Endothelial cell of umbilical vein (primary cell): ENCODE measurements at regions of chr12 and their contacts with region 1.

Region 1: GRCh38 chr12:119544765-119545625 is 48.6 kb upstream of the TMEM233 start:
- DNase-seq: peak; percentile 76
- H3K4me3 ChIP-seq: no peak overlapping the region
- H3K27ac ChIP-seq: no peak overlapping the region
- H3K4me1 ChIP-seq: no peaks in the 10 kb centered on the region
- H3K27me3 ChIP-seq: no peaks in the 10 kb centered on the region
- CTCF ChIP-seq: peak; percentile 63 to 76
- POLR2A ChIP-seq: no peak

Region 2: GRCh38 chr12:118377884-118378470 is 1167.0 kb before region 1 on chr12:
- CTCF ChIA-PET with region 1: interaction called, 13 read pairs
- POLR2A ChIA-PET with region 1: no interaction called
- dilution Hi-C with region 1: no loop called
- intact Hi-C with region 1: no loop called
- DNase-seq: peak; percentile 69
- H3K4me3 ChIP-seq: peak overlapping the region; percentile 80 to 94 (median 92)
- H3K27ac ChIP-seq: no peak overlapping the region
- H3K4me1 ChIP-seq: peaks cover 16% of the 10 kb centered on the region
- H3K27me3 ChIP-seq: no peaks in the 10 kb centered on the region
- CTCF ChIP-seq: peak; percentile 82 to 88
- POLR2A ChIP-seq: no peak

Region 3: DNA sequence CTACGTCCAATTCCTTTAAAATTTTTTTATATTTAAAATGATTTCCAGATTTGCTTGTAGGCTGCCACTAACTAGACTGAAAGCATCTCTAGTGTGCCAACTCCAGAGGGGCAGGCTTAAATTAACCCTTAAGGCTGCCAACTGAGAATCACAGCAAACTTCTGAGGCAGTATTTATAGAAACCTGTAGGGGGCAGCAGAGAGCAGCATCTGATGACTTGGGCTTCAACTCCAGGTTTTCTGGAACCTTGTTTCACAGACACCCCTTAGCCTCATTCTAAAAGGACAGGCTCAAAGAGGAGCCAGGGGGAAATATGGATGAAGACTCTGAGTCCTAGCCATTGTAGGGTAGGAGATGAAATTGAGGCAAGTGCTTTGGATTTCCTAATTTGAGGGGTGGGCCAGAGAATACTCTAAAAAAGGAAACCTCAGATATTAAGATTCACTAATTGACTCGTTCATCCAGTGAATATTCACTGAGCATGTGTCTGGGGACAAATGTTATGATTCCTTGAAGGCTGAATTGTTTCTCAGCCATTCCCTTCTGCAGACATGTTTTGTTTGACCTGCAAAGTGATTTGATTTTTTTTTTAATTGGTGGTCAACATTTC is 429.6 kb before region 1 on chr12:
- CTCF ChIA-PET with region 1: interaction called, 5 read pairs
- POLR2A ChIA-PET with region 1: no interaction called
- dilution Hi-C with region 1: no loop called
- intact Hi-C with region 1: loop called (anchors 1 kb)
- DNase-seq: peak; percentile 43
- H3K4me3 ChIP-seq: no peak overlapping the region
- H3K27ac ChIP-seq: no peak overlapping the region
- H3K4me1 ChIP-seq: no peaks in the 10 kb centered on the region
- H3K27me3 ChIP-seq: no peaks in the 10 kb centered on the region
- CTCF ChIP-seq: peak; percentile 68 to 75
- POLR2A ChIP-seq: no peak

Region 4: DNA sequence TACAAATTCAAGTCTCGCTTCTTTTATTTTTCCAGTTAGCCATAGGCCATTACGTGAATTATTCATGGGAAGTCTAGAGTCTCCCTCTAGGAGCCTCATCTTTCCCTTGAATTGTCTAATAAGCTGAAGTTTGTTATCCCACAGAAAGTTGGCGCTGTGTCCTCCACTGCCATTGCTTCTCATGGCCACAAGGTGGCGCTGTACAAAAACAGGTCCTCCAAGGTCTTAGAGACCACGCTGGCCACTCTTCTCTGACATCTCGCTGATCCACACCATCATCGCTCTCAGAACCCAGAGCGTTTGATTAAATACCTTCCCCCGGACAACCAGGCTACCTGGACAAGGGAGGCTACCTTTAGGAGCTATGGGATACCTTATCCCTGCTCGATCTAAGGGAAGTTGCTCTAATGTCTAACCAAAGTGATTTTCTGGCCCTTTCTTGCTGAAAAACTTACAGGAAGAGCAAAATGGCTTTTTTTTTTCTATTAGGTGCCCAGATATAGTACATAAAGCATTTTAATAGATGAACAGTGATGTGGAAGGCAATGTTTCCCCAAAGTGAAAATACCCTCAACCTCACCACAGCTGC is 100.4 kb before region 1 on chr12:
- CTCF ChIA-PET with region 1: interaction called, 9 read pairs
- POLR2A ChIA-PET with region 1: no interaction called
- dilution Hi-C with region 1: no loop called
- intact Hi-C with region 1: loop called (anchors 1 kb)
- DNase-seq: peak; percentile 28
- H3K4me3 ChIP-seq: no peak overlapping the region
- H3K27ac ChIP-seq: no peak overlapping the region
- H3K4me1 ChIP-seq: no peaks in the 10 kb centered on the region
- H3K27me3 ChIP-seq: no peaks in the 10 kb centered on the region
- CTCF ChIP-seq: peak; percentile 60 to 90
- POLR2A ChIP-seq: no peak